ENCODE measurements at regions of chr16 and their contacts with region 1.

Region 1: GRCh38 chr16:88569985-88570690 is at the start of gene ZC3H18:
- DNase-seq: peak; percentile 96 to 100 (median 99)
- ATAC-seq: peak; percentile 95
- H3K4me3 ChIP-seq: peak within 1 kb of the TSS; percentile 67 to 76
- H3K4me3 Mint-ChIP-seq: peak within 1 kb of the TSS; percentile 87
- H3K27ac ChIP-seq: peak within 1 kb of the TSS; percentile 55 to 85
- H3K27ac Mint-ChIP-seq: peak within 1 kb of the TSS; percentile 91
- H3K4me1 ChIP-seq: peaks cover 20% of the 10 kb centered on the region
- H3K4me1 Mint-ChIP-seq: peaks cover 34% of the 10 kb centered on the region
- H3K27me3 ChIP-seq: no peaks in the 10 kb centered on the region
- H3K27me3 Mint-ChIP-seq: no peaks in the 10 kb centered on the region
- CTCF ChIP-seq: no peak
- total RNA-seq, gene ZC3H18: 140 to 149 TPM

Region 2: GRCh38 chr16:88533932-88534732 is 36.0 kb before region 1 on chr16:
- CTCF ChIA-PET with region 1: interaction called, 3 read pairs
- POLR2A ChIA-PET with region 1: no interaction called
- intact Hi-C with region 1: loop called (anchors 1 kb)
- DNase-seq: peak; percentile 59 to 92 (median 76)
- ATAC-seq: peak; percentile 70
- H3K4me3 ChIP-seq: peak overlapping the region; percentile 15 to 57
- H3K4me3 Mint-ChIP-seq: peak overlapping the region; percentile 64
- H3K27ac ChIP-seq: peak overlapping the region in 1 of 2 experiments; percentile 58
- H3K27ac Mint-ChIP-seq: no peak overlapping the region
- H3K4me1 ChIP-seq: peaks cover 8% of the 10 kb centered on the region
- H3K4me1 Mint-ChIP-seq: peaks cover 15% of the 10 kb centered on the region
- H3K27me3 ChIP-seq: no peaks in the 10 kb centered on the region
- H3K27me3 Mint-ChIP-seq: no peaks in the 10 kb centered on the region
- CTCF ChIP-seq: no peak

Region 3: DNA sequence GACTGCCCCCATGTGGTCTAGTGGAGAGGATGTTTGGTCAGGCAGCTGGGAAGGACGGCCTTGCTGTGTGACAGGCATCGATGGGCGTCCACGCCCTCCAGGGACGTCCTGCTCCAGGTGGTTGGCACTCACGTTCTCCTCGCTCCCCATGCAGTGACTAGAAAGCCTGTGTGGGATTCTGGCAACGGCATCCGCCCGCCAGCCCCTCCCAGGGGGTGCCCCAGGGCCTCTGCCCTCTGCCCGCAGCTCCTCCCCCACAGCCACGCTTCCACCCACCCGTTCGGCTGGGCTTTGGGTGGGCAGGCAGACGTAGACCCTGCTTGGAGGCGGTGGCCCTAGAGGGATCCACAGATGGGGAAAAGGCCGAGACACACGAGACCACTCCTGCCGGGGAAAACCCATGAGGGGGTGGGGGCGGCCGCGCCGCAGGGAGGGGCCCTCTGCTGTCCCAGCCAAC is 63.6 kb after region 1 on chr16:
- CTCF ChIA-PET with region 1: no interaction called
- POLR2A ChIA-PET with region 1: interaction called, 5 read pairs
- intact Hi-C with region 1: loop called in 1 of 2 experiments (anchors 2 kb)
- DNase-seq: peak in 8 of 9 experiments; percentile 40 to 91 (median 72)
- ATAC-seq: peak; percentile 54
- H3K4me3 ChIP-seq: peak overlapping the region; percentile 61 to 67
- H3K4me3 Mint-ChIP-seq: peak overlapping the region; percentile 80
- H3K27ac ChIP-seq: peak overlapping the region; percentile 50 to 78
- H3K27ac Mint-ChIP-seq: peak overlapping the region; percentile 87
- H3K4me1 ChIP-seq: peaks cover 42% of the 10 kb centered on the region
- H3K4me1 Mint-ChIP-seq: peaks cover 31% of the 10 kb centered on the region
- H3K27me3 ChIP-seq: peaks cover 0 to 8% of the 10 kb centered on the region in 2 experiments
- H3K27me3 Mint-ChIP-seq: peaks cover 5% of the 10 kb centered on the region
- CTCF ChIP-seq: no peak

Region 4: DNA sequence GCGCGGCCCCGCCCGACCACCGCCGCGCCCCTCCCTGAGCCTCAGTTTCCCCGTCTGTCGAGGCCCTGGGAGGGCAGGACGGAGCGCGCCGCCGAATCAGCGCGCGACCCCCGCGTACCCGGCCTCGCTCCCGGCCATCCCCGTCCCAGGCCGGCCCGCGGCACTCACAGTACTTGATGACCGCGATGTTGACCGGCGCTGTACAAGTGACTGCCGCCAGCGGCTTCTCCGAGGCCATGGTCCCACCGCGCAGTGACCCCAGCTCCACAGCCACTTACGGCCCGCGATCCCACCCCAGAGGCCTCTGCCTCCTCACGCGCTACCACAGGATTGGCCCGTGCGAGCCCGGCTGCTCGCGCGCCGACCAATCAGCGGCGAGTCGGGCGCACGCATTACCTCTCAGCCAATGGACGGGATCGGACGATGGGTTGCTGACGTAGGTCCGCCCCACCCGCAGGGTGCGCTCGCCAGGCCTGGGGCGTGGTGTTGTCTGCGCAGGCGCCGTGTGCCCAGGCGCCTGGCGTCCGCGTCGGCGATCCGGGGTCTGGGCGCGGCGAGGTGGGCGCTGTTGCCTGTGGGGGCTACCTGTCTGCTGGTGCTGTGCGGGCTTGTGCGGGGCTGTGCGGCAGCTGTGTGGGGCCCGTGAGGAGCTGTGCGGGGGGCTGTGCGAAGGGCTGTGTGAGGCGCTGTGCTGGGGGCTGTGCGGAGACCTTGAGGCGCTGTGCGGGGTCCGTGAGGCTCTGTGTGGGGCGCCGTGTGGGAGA is 92.9 kb after region 1 on chr16 and contains the start of gene MVD:
- CTCF ChIA-PET with region 1: no interaction called
- POLR2A ChIA-PET with region 1: interaction called, 12 read pairs
- intact Hi-C with region 1: loop called in 1 of 2 experiments (anchors 1 kb)
- DNase-seq: peak; percentile 88 to 99 (median 95)
- ATAC-seq: peak; percentile 96
- H3K4me3 ChIP-seq: peak within 1 kb of the TSS; percentile 81 to 85
- H3K4me3 Mint-ChIP-seq: peak within 1 kb of the TSS; percentile 94
- H3K27ac ChIP-seq: peak within 1 kb of the TSS; percentile 84 to 87
- H3K27ac Mint-ChIP-seq: peak within 1 kb of the TSS; percentile 95
- H3K4me1 ChIP-seq: peaks cover 15% of the 10 kb centered on the region
- H3K4me1 Mint-ChIP-seq: peaks cover 20% of the 10 kb centered on the region
- H3K27me3 ChIP-seq: no peaks in the 10 kb centered on the region
- H3K27me3 Mint-ChIP-seq: no peaks in the 10 kb centered on the region
- CTCF ChIP-seq: no peak
- total RNA-seq, gene MVD: 118 to 124 TPM

Region 5: DNA sequence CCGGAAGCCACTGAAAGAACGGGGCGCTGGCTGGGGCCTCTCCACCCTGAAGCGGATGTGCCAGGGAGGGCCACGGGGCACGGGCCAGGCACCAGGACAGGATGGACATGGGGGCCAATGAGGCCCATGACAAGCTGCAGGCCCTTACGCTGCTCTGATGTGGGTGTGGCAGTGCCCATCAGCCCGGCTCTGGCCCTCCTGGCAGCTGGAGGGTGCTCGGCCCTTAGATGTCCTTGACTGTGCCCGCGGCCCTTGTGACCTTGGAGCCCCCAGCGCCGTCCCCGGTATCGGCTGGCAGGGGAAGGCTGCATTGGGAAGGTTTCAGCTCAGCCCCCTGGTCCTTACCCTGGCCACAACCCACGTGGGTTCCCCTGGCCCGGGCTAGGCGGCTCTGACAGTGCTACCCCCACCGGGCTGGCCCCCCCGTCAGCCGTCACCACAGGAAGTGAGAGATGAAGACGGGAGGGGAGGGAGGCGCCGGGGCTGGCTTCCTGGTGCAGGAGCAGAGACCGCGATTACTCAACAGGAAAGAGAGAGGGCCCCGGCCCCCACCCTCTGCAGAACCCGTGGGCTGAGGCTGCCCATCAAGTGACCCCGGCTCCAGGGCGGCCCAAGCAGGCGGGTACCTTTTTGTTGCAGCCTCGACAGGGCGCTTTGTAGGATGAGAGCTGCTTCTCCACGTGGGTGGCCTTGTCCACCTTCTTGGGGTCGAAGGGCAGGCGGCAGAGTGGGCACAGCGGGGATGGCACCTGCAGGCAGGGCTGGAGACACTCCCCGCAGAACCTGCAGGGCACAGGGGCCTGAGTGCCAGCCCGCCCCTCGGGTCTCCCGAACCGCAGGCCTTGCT is 130.7 kb after region 1 on chr16:
- CTCF ChIA-PET with region 1: interaction called, 6 read pairs
- POLR2A ChIA-PET with region 1: interaction called, 6 read pairs
- intact Hi-C with region 1: loop called (anchors 1 kb)
- DNase-seq: peak; percentile 92 to 98 (median 97)
- ATAC-seq: peak; percentile 65
- H3K4me3 ChIP-seq: peak overlapping the region; percentile 74 to 95
- H3K4me3 Mint-ChIP-seq: peak overlapping the region; percentile 90
- H3K27ac ChIP-seq: peak overlapping the region; percentile 83 to 91
- H3K27ac Mint-ChIP-seq: peak overlapping the region; percentile 98
- H3K4me1 ChIP-seq: peaks cover 56% of the 10 kb centered on the region
- H3K4me1 Mint-ChIP-seq: peaks cover 61% of the 10 kb centered on the region
- H3K27me3 ChIP-seq: no peaks in the 10 kb centered on the region
- H3K27me3 Mint-ChIP-seq: no peaks in the 10 kb centered on the region
- CTCF ChIP-seq: no peak

Region 6: GRCh38 chr16:88811769-88812512 is 241.8 kb after region 1 on chr16 and contains the start of gene APRT:
- CTCF ChIA-PET with region 1: no interaction called
- POLR2A ChIA-PET with region 1: interaction called, 6 read pairs
- intact Hi-C with region 1: loop called in 1 of 2 experiments (anchors 1 kb)
- DNase-seq: peak; percentile 93 to 99 (median 97)
- ATAC-seq: peak; percentile 90
- H3K4me3 ChIP-seq: peak within 1 kb of the TSS; percentile 75 to 99
- H3K4me3 Mint-ChIP-seq: peak within 1 kb of the TSS; percentile 97
- H3K27ac ChIP-seq: peak within 1 kb of the TSS; percentile 71 to 87
- H3K27ac Mint-ChIP-seq: peak within 1 kb of the TSS; percentile 97
- H3K4me1 ChIP-seq: peaks cover 21% of the 10 kb centered on the region
- H3K4me1 Mint-ChIP-seq: peaks cover 19% of the 10 kb centered on the region
- H3K27me3 ChIP-seq: no peaks in the 10 kb centered on the region
- H3K27me3 Mint-ChIP-seq: no peaks in the 10 kb centered on the region
- CTCF ChIP-seq: no peak
- total RNA-seq, gene APRT: 171 to 178 TPM

Region 7: GRCh38 chr16:89241187-89242007 is 671.3 kb after region 1 on chr16:
- CTCF ChIA-PET with region 1: no interaction called
- POLR2A ChIA-PET with region 1: no interaction called
- intact Hi-C with region 1: loop called in 1 of 2 experiments (anchors 10 kb)
- DNase-seq: peak; percentile 62 to 97 (median 87)
- ATAC-seq: peak; percentile 88
- H3K4me3 ChIP-seq: peak overlapping the region; percentile 76 to 85
- H3K4me3 Mint-ChIP-seq: peak overlapping the region; percentile 92
- H3K27ac ChIP-seq: peak overlapping the region; percentile 89 to 100
- H3K27ac Mint-ChIP-seq: peak overlapping the region; percentile 99
- H3K4me1 ChIP-seq: peaks cover 8% of the 10 kb centered on the region
- H3K4me1 Mint-ChIP-seq: peaks cover 25% of the 10 kb centered on the region
- H3K27me3 ChIP-seq: no peaks in the 10 kb centered on the region
- H3K27me3 Mint-ChIP-seq: no peaks in the 10 kb centered on the region
- CTCF ChIP-seq: no peak

Measured in CD8-positive, alpha-beta T cell (primary cell).